Motor neuron (in vitro differentiated cells): ENCODE measurements at regions of chr14 and their contacts with region 1.

Region 1: GRCh38 chr14:57066887-57067513 is 201.7 kb downstream of the EXOC5 start:
- ATAC-seq: peak; percentile 52 to 95 (median 76)
- H3K4me3 ChIP-seq: no peak overlapping the region
- H3K27ac ChIP-seq: no peak overlapping the region
- H3K4me1 ChIP-seq: peaks cover 0 to 2% of the 10 kb centered on the region in 2 donors

Region 2: GRCh38 chr14:56659964-56660551 is 406.9 kb before region 1 on chr14:
- in situ Hi-C with region 1: loop called in 1 of 9 experiments (anchors 25 kb)
- ATAC-seq: peak in 7 of 8 experiments; percentile 41 to 88 (median 74)
- H3K4me3 ChIP-seq: no peak overlapping the region
- H3K27ac ChIP-seq: no peak overlapping the region
- H3K4me1 ChIP-seq: no peaks in the 10 kb centered on the region

Region 3: DNA sequence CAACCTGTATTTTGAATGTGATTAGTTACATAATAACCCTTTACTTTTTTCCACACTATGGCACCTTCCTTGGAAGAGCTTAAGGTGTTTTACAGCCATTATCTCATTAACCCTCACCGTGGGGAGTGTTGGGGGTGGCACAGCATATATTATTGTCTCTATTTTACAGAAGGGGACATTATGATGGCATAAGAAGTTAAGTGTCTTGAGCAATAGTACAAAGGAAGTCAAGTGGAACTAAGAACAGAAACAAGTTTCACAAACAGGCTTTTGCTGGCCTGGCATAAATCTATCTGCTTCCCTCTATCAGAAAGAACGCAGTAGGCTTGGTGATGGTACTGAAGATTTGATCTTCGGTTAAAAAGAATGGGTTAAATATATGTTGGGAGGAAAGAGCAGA is 87.1 kb before region 1 on chr14:
- in situ Hi-C with region 1: no loop called
- ATAC-seq: no peak
- H3K4me3 ChIP-seq: no peak overlapping the region
- H3K27ac ChIP-seq: no peak overlapping the region
- H3K4me1 ChIP-seq: no peaks in the 10 kb centered on the region